ENCODE measurements at regions of chr1 and their contacts with region 1.

Region 1: GRCh38 chr1:233647073-233647472 is 33.2 kb downstream of the KCNK1 start:
- DNase-seq: no peak
- ATAC-seq: peak; percentile 34
- H3K4me3 ChIP-seq: no peak overlapping the region
- H3K27ac ChIP-seq: no peak overlapping the region
- H3K4me1 ChIP-seq: peaks cover 4% of the 10 kb centered on the region
- H3K27me3 ChIP-seq: no peaks in the 10 kb centered on the region
- CTCF ChIP-seq: no peak
- EP300 ChIP-seq: no peak
- POLR2A ChIP-seq: no peak
- RAD21 ChIP-seq: no peak

Region 2: DNA sequence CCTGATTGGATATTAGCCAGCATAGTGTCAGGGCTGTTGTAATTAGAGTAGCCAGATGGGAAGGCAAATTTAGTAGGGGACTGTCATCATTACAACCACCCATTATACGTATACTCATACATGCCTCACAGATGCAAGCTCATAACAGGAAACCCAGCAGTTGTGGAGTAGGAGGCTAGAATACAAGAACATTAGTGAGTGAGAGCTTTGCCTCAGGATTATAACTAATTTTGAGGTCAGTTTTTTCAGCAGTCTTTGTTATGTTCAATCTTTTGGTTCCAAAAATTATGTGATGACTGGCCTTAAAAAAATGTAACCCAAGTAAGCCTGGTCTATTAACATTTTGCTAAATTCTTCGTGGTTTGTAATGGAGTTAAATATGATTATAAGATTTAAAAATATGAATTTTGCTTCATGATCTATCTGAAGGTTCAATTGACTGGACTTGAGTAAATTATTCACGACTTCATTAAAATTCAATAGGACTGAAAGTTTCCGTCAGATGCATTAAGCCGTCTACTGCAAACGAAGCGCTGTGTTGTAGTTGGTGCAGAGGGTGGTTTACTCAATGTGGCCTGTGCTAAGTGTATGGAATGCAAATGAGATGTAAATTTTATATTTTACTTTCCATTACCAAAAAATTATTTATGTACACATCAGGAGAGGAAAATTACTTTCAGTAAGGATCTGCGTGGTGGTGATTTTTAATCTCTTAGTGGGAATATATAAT is 15.7 kb after region 1 on chr1:
- CTCF ChIA-PET with region 1: interaction called, 17 read pairs
- POLR2A ChIA-PET with region 1: interaction called, 3 read pairs
- RAD21 ChIA-PET with region 1: no interaction called
- SMC1A ChIA-PET with region 1: interaction called, 39 read pairs
- in situ Hi-C with region 1: no loop called
- intact Hi-C with region 1: no loop called
- DNase-seq: no peak
- ATAC-seq: peak; percentile 47
- H3K4me3 ChIP-seq: no peak overlapping the region
- H3K27ac ChIP-seq: no peak overlapping the region
- H3K4me1 ChIP-seq: no peaks in the 10 kb centered on the region
- H3K27me3 ChIP-seq: no peaks in the 10 kb centered on the region
- CTCF ChIP-seq: no peak
- EP300 ChIP-seq: no peak
- POLR2A ChIP-seq: no peak
- RAD21 ChIP-seq: no peak

Region 3: DNA sequence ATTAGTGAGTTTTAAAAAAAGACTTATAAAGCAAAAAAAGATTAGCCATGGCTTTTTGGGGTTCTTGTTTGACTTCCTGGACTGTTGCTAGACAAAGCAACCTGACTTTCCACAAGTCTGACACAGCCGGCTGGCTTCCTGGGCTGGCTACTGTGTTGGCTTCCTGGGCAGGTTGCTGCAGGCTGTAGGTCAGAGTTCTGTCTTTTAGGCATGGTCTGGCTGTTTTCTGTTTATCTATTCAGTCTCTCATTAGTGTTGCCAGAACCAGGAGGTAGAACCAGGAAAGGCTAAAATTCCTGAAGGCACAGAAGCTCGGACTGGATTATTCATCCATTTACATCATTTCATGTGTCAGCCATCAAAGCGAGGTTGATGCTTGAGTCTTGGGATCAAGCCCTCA is 168.8 kb after region 1 on chr1:
- CTCF ChIA-PET with region 1: no interaction called
- POLR2A ChIA-PET with region 1: no interaction called
- RAD21 ChIA-PET with region 1: no interaction called
- SMC1A ChIA-PET with region 1: no interaction called
- in situ Hi-C with region 1: no loop called
- intact Hi-C with region 1: no loop called
- DNase-seq: no peak
- ATAC-seq: no peak
- H3K4me3 ChIP-seq: no peak overlapping the region
- H3K27ac ChIP-seq: no peak overlapping the region
- H3K4me1 ChIP-seq: no peaks in the 10 kb centered on the region
- H3K27me3 ChIP-seq: no peaks in the 10 kb centered on the region; a peak in 1 of 4 replicates
- CTCF ChIP-seq: no peak
- EP300 ChIP-seq: no peak
- POLR2A ChIP-seq: no peak
- RAD21 ChIP-seq: no peak

Measured in GM12878 (cell line).